CD8-positive, alpha-beta T cell (primary cell): ENCODE measurements at regions of chr1 and their contacts with region 1.

Region 1: GRCh38 chr1:109277434-109278204 is 5.3 kb downstream of the PSRC1 start:
- DNase-seq: peak in 8 of 9 experiments; percentile 31 to 74 (median 64)
- ATAC-seq: peak; percentile 75
- H3K4me3 ChIP-seq: no peak overlapping the region
- H3K4me3 Mint-ChIP-seq: no peak overlapping the region
- H3K27ac ChIP-seq: no peak overlapping the region
- H3K27ac Mint-ChIP-seq: no peak overlapping the region
- H3K4me1 ChIP-seq: peaks cover 8% of the 10 kb centered on the region
- H3K4me1 Mint-ChIP-seq: peaks cover 7% of the 10 kb centered on the region
- H3K27me3 ChIP-seq: no peaks in the 10 kb centered on the region
- H3K27me3 Mint-ChIP-seq: no peaks in the 10 kb centered on the region
- CTCF ChIP-seq: peak; percentile 79

Region 2: DNA sequence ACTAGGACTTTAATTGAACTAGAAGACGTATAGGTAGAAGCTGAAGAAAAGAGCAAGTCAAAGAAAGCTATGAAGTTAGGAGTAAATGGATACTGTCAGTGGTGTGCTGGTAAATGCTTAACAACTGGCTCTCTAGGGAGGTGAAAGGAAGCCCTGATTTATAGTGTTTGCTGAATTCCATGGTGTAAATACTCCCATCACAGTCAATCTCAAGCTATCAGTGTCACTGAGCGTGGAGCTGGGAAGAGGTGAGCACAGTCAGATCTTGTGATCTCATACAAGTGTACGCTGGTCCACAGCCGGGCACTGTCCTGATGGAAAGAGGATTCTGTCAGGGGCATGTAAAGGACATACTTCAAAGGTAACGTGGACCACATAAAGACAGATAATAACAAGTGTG is 135.4 kb before region 1 on chr1:
- CTCF ChIA-PET with region 1: no interaction called
- POLR2A ChIA-PET with region 1: no interaction called
- intact Hi-C with region 1: no loop called
- DNase-seq: no peak
- ATAC-seq: no peak
- H3K4me3 ChIP-seq: no peak overlapping the region
- H3K4me3 Mint-ChIP-seq: no peak overlapping the region
- H3K27ac ChIP-seq: no peak overlapping the region
- H3K27ac Mint-ChIP-seq: no peak overlapping the region
- H3K4me1 ChIP-seq: no peaks in the 10 kb centered on the region
- H3K4me1 Mint-ChIP-seq: no peaks in the 10 kb centered on the region
- H3K27me3 ChIP-seq: no peaks in the 10 kb centered on the region
- H3K27me3 Mint-ChIP-seq: no peaks in the 10 kb centered on the region
- CTCF ChIP-seq: no peak

Region 3: DNA sequence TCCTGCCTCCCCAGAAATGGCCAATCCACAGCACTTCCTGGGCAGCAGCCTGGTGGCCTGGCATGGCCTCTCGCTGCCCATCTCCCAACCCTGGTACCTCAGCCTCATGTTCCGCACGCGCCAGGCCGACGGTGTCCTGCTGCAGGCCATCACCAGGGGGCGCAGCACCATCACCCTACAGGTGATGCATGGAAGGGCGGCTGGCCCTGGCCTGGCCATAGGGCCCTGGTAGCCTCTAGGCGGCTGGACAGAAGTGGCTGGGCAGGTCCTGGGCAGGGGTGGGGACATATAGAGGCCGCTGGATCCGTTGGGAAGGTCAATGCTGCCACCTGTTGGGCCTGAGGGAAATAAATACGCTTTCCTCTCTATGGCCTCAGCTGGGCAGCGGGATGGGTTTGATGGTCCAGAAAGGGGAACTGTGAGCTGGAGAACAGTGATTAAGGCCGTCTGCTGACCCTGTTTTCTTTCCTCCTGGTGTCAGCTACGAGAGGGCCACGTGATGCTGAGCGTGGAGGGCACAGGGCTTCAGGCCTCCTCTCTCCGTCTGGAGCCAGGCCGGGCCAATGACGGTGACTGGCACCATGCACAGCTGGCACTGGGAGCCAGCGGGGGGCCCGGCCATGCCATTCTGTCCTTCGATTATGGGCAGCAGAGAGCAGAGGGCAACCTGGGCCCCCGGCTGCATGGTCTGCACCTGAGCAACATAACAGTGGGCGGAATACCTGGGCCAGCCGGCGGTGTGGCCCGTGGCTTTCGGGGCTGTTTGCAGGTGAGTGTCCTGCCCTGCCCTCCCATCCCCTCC is 13.8 kb before region 1 on chr1:
- CTCF ChIA-PET with region 1: interaction called, 12 read pairs
- POLR2A ChIA-PET with region 1: no interaction called
- intact Hi-C with region 1: no loop called
- DNase-seq: peak; percentile 54 to 81 (median 75)
- ATAC-seq: peak; percentile 97
- H3K4me3 ChIP-seq: no peak overlapping the region
- H3K4me3 Mint-ChIP-seq: no peak overlapping the region
- H3K27ac ChIP-seq: no peak overlapping the region
- H3K27ac Mint-ChIP-seq: no peak overlapping the region
- H3K4me1 ChIP-seq: no peaks in the 10 kb centered on the region
- H3K4me1 Mint-ChIP-seq: no peaks in the 10 kb centered on the region
- H3K27me3 ChIP-seq: no peaks in the 10 kb centered on the region
- H3K27me3 Mint-ChIP-seq: no peaks in the 10 kb centered on the region
- CTCF ChIP-seq: peak; percentile 99

Region 4: GRCh38 chr1:109397538-109398342 is 120.1 kb after region 1 on chr1 and contains the start of gene SORT1:
- CTCF ChIA-PET with region 1: interaction called, 109 read pairs
- POLR2A ChIA-PET with region 1: interaction called, 3 read pairs
- intact Hi-C with region 1: loop called (anchors 1 kb)
- DNase-seq: peak; percentile 25 to 84 (median 71)
- ATAC-seq: peak; percentile 97
- H3K4me3 ChIP-seq: peak within 1 kb of the TSS; percentile 49 to 53
- H3K4me3 Mint-ChIP-seq: peak within 1 kb of the TSS; percentile 83
- H3K27ac ChIP-seq: no peak within 1 kb of the TSS
- H3K27ac Mint-ChIP-seq: no peak within 1 kb of the TSS
- H3K4me1 ChIP-seq: peaks cover 9% of the 10 kb centered on the region
- H3K4me1 Mint-ChIP-seq: peaks cover 15% of the 10 kb centered on the region
- H3K27me3 ChIP-seq: peaks cover 10 to 21% of the 10 kb centered on the region in 2 experiments
- H3K27me3 Mint-ChIP-seq: peaks cover 34% of the 10 kb centered on the region
- CTCF ChIP-seq: no peak
- total RNA-seq, gene SORT1: 0.61 to 0.73 TPM

Region 5: GRCh38 chr1:109493805-109494539 is 216.4 kb after region 1 on chr1 and contains the start of gene CYB561D1:
- CTCF ChIA-PET with region 1: interaction called, 15 read pairs
- POLR2A ChIA-PET with region 1: no interaction called
- intact Hi-C with region 1: no loop called
- DNase-seq: peak; percentile 79 to 95 (median 88)
- ATAC-seq: peak; percentile 90
- H3K4me3 ChIP-seq: peak within 1 kb of the TSS; percentile 94 to 95
- H3K4me3 Mint-ChIP-seq: peak within 1 kb of the TSS; percentile 95
- H3K27ac ChIP-seq: peak within 1 kb of the TSS; percentile 53 to 58
- H3K27ac Mint-ChIP-seq: peak within 1 kb of the TSS; percentile 85
- H3K4me1 ChIP-seq: peaks cover 49% of the 10 kb centered on the region
- H3K4me1 Mint-ChIP-seq: peaks cover 52% of the 10 kb centered on the region
- H3K27me3 ChIP-seq: no peaks in the 10 kb centered on the region
- H3K27me3 Mint-ChIP-seq: no peaks in the 10 kb centered on the region
- CTCF ChIP-seq: peak; percentile 88
- total RNA-seq, gene CYB561D1: 10.2 to 12.3 TPM

Region 6: GRCh38 chr1:109499661-109500536 is 222.3 kb after region 1 on chr1:
- CTCF ChIA-PET with region 1: interaction called, 15 read pairs
- POLR2A ChIA-PET with region 1: no interaction called
- intact Hi-C with region 1: no loop called
- DNase-seq: peak; percentile 34 to 81 (median 74)
- ATAC-seq: peak; percentile 16
- H3K4me3 ChIP-seq: no peak overlapping the region
- H3K4me3 Mint-ChIP-seq: peak overlapping the region; percentile 63
- H3K27ac ChIP-seq: peak overlapping the region; percentile 85 to 94
- H3K27ac Mint-ChIP-seq: peak overlapping the region; percentile 97
- H3K4me1 ChIP-seq: peaks cover 94% of the 10 kb centered on the region
- H3K4me1 Mint-ChIP-seq: peaks cover 89% of the 10 kb centered on the region
- H3K27me3 ChIP-seq: no peaks in the 10 kb centered on the region
- H3K27me3 Mint-ChIP-seq: no peaks in the 10 kb centered on the region
- CTCF ChIP-seq: peak; percentile 59

Region 7: GRCh38 chr1:110024613-110025012 is 747.0 kb after region 1 on chr1:
- CTCF ChIA-PET with region 1: no interaction called
- POLR2A ChIA-PET with region 1: no interaction called
- intact Hi-C with region 1: no loop called
- DNase-seq: no peak
- ATAC-seq: no peak
- H3K4me3 ChIP-seq: no peak overlapping the region
- H3K4me3 Mint-ChIP-seq: no peak overlapping the region
- H3K27ac ChIP-seq: no peak overlapping the region
- H3K27ac Mint-ChIP-seq: no peak overlapping the region
- H3K4me1 ChIP-seq: peaks cover 2% of the 10 kb centered on the region
- H3K4me1 Mint-ChIP-seq: peaks cover 1% of the 10 kb centered on the region
- H3K27me3 ChIP-seq: no peaks in the 10 kb centered on the region
- H3K27me3 Mint-ChIP-seq: no peaks in the 10 kb centered on the region
- CTCF ChIP-seq: no peak